Upper lobe of right lung (tissue), 1 donor: ENCODE measurements at regions of chr16 and their contacts with region 1.

Region 1: GRCh38 chr16:2339521-2340484 is 725 bp downstream of the ABCA3 start:
- DNase-seq: peak; percentile 89
- ATAC-seq: peak; percentile 40
- H3K4me3 ChIP-seq: peak overlapping the region; percentile 75
- H3K27ac ChIP-seq: peak overlapping the region; percentile 68
- H3K4me1 ChIP-seq: peaks cover 10% of the 10 kb centered on the region
- H3K27me3 ChIP-seq: no peaks in the 10 kb centered on the region
- CTCF ChIP-seq: no peak

Region 2: GRCh38 chr16:2429034-2429770 is 89.4 kb after region 1 on chr16 and contains the start of gene CCNF:
- intact Hi-C with region 1: no loop called
- DNase-seq: peak; percentile 99
- ATAC-seq: peak; percentile 98
- H3K4me3 ChIP-seq: peak within 1 kb of the TSS; percentile 82
- H3K27ac ChIP-seq: peak within 1 kb of the TSS; percentile 60
- H3K4me1 ChIP-seq: peaks cover 13% of the 10 kb centered on the region
- H3K27me3 ChIP-seq: no peaks in the 10 kb centered on the region
- CTCF ChIP-seq: no peak
- total RNA-seq, gene CCNF: 3.6 TPM

Region 3: DNA sequence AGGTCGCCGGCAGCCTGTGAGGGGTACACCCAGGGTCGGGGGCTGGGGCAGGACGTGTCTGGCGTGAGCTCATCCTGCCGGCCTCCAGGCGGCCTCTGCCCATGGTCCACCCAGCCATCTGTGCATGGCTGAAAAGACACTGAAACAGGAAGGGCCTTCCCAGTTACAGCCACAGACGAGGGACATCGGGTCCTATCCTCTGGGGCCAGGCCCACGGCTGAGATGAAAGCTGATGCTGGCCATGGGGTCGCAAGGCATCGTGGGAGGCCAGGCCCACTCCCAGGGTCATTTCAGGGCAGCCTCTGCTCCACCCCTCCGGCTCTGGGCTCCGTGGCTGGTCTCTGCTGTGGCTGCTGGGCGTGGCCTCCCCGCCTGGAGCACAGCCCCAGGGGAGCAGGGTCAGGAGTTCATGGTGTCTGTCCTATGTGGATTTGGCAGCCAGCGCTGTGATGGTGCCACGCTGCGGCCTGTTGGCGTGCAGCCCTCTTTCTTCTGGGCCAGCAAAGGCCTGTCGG is 157.4 kb after region 1 on chr16:
- intact Hi-C with region 1: loop called (anchors 10 kb)
- DNase-seq: peak; percentile 83
- ATAC-seq: peak; percentile 23
- H3K4me3 ChIP-seq: no peak overlapping the region
- H3K27ac ChIP-seq: peak overlapping the region; percentile 32
- H3K4me1 ChIP-seq: peaks cover 37% of the 10 kb centered on the region
- H3K27me3 ChIP-seq: no peaks in the 10 kb centered on the region
- CTCF ChIP-seq: no peak